ENCODE measurements at regions of chrX and their contacts with region 1.

Region 1: GRCh38 chrX:65595460-65595876 is 60.9 kb upstream of the LAS1L start:
- DNase-seq: peak; percentile 83
- H3K4me3 Mint-ChIP-seq: peak overlapping the region; percentile 65
- H3K27ac Mint-ChIP-seq: peak overlapping the region; percentile 96
- H3K4me1 Mint-ChIP-seq: peaks cover 54% of the 10 kb centered on the region
- H3K27me3 Mint-ChIP-seq: no peaks in the 10 kb centered on the region

Region 2: GRCh38 chrX:65581661-65582339 is 13.7 kb before region 1 on chrX:
- intact Hi-C with region 1: loop called (anchors 1 kb)
- DNase-seq: peak; percentile 27
- H3K4me3 Mint-ChIP-seq: no peak overlapping the region
- H3K27ac Mint-ChIP-seq: no peak overlapping the region
- H3K4me1 Mint-ChIP-seq: peaks cover 14% of the 10 kb centered on the region
- H3K27me3 Mint-ChIP-seq: no peaks in the 10 kb centered on the region

Region 3: GRCh38 chrX:65677954-65678469 is 82.5 kb after region 1 on chrX:
- intact Hi-C with region 1: loop called (anchors 1 kb)
- DNase-seq: no peak
- H3K4me3 Mint-ChIP-seq: peak overlapping the region; percentile 45
- H3K27ac Mint-ChIP-seq: peak overlapping the region; percentile 78
- H3K4me1 Mint-ChIP-seq: peaks cover 89% of the 10 kb centered on the region
- H3K27me3 Mint-ChIP-seq: no peaks in the 10 kb centered on the region

Region 4: DNA sequence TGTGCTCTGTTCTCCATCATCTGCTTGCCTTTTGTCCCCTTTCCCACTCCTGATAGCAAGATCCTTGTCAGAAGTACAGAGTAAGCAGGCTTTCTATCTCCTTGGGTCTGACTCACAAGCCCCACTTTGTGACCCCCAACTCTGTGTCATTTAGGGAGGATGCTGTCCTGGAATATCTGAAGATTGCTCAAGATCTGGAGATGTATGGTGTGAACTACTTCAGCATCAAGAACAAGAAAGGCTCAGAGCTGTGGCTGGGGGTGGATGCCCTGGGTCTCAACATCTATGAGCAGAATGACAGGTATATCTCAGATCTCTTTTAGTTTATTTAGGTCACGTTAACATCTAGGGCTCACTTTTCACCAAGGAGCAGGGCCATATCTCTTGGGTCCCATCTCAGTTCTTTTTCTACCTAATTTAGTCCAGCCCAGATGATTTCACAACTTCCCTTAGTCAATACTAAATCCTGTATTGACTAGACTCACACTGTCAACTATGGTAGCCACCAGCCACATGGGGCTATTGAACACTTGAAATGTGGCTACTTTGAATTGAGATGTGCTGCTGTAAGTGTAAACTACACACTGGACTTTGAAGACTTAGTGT is 136.3 kb after region 1 on chrX:
- intact Hi-C with region 1: loop called (anchors 2 kb)
- DNase-seq: no peak
- H3K4me3 Mint-ChIP-seq: no peak overlapping the region
- H3K27ac Mint-ChIP-seq: peak overlapping the region; percentile 80
- H3K4me1 Mint-ChIP-seq: peaks cover 33% of the 10 kb centered on the region
- H3K27me3 Mint-ChIP-seq: no peaks in the 10 kb centered on the region

Region 5: DNA sequence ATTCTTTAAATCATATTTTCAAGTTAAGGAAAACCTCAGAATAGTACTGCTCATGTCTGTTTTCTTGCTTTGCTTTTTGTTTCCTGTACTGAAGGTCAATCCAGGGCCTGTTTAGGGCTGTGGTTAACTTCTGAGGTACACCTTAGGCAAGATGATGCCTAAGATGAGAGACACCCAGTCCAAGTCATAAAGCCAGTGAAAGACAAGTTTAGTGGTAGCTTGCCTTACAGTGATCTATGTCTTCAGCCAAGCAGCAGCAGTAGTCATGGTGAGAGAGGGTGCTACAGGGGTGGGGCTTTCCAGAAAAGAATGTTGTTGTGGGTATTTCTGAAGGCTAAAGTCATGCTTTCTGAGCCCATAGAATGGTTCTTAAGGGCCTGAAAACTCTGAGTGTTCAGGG is 270.7 kb after region 1 on chrX:
- intact Hi-C with region 1: loop called (anchors 5 kb)
- DNase-seq: peak; percentile 31
- H3K4me3 Mint-ChIP-seq: no peak overlapping the region
- H3K27ac Mint-ChIP-seq: peak overlapping the region; percentile 67
- H3K4me1 Mint-ChIP-seq: peaks cover 24% of the 10 kb centered on the region
- H3K27me3 Mint-ChIP-seq: no peaks in the 10 kb centered on the region

Region 6: DNA sequence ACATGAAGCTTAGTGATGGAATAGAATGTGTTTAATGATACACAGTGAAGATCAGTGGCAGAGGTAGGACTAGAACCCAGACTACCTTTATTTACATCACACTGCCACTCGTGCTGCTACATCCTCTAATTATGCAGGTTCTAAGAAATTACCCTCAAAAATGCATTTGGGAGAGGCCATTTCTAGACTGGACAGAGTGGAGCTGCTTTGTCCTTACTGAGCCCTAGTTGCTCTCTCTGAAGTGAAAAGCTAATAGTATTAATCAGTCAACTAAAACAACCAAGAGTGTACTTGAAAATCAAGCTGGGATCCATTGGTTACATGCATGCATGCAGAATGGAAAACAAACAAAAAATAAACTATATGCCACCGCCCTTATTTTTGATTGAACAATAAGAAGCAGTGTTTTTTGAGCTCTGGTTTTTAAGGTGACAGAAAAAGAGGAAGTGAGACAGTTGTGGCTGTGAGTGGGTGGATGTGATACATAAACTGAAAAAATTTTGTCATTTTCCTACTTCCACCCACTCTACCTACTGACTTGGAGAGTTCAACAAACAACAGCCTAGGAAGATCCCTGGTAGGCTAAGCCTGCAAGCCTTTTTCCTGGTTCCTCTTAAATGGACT is 451.3 kb after region 1 on chrX:
- intact Hi-C with region 1: loop called (anchors 1 kb)
- DNase-seq: peak; percentile 14
- H3K4me3 Mint-ChIP-seq: peak overlapping the region; percentile 69
- H3K27ac Mint-ChIP-seq: peak overlapping the region; percentile 100
- H3K4me1 Mint-ChIP-seq: peaks cover 40% of the 10 kb centered on the region
- H3K27me3 Mint-ChIP-seq: no peaks in the 10 kb centered on the region

Region 7: DNA sequence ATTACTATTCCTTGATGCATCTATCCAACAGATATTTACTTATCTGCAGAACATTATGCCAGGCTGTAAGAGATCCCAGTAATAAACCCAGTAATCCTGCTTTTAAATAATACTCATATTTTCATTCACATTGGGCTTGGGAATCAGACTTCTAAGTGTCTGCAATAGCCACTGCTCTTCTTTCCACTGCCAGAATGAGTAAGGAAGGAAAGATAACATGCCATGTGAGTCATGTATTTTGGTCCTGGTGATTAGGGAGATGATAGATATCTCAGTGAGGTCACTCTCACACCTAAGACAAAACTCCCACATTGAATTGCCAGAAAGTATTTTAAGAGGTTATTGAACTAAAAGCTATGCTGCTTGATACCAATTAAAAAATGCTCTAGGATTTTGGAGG is 554.7 kb after region 1 on chrX:
- intact Hi-C with region 1: no loop called
- DNase-seq: no peak
- H3K4me3 Mint-ChIP-seq: no peak overlapping the region
- H3K27ac Mint-ChIP-seq: no peak overlapping the region
- H3K4me1 Mint-ChIP-seq: no peaks in the 10 kb centered on the region
- H3K27me3 Mint-ChIP-seq: peaks cover 1% of the 10 kb centered on the region

Measured in activated T-helper 1 cell treated with anti-CD3 and anti-CD28 coated beads, Interleukin-12 subunit alpha, Interleukin-12 subunit beta, Interleukin-2, Interleukin-4 antibody, amounts not matched to agents 30 ng/mL and 10 ng/mL and 1 ng/mL, durations not matched to agents 14 hours and 24 hours and 36 hours (primary cell).